GM12878 (cell line): ENCODE measurements at regions of chr13 and their contacts with region 1.

Region 1: GRCh38 chr13:30408319-30409101 is 13.8 kb upstream of the UBE2L5 start:
- DNase-seq: no peak
- ATAC-seq: peak; percentile 97
- H3K4me3 ChIP-seq: no peak overlapping the region; the same call in 1 of the 2 replicates
- H3K27ac ChIP-seq: no peak overlapping the region
- H3K4me1 ChIP-seq: peaks cover 6% of the 10 kb centered on the region
- H3K27me3 ChIP-seq: no peaks in the 10 kb centered on the region
- CTCF ChIP-seq: peak; percentile 56 to 86 (median 74)
- EP300 ChIP-seq: 0 out of 4 replicates have a peak, but pooled peaks of 1 of the 2 experiments have one; percentile 22
- POLR2A ChIP-seq: peak; percentile 62
- RAD21 ChIP-seq: peak; percentile 72

Region 2: GRCh38 chr13:30395192-30396084 is 13.1 kb before region 1 on chr13:
- CTCF ChIA-PET with region 1: interaction called, 14 read pairs
- POLR2A ChIA-PET with region 1: interaction called, 5 read pairs
- RAD21 ChIA-PET with region 1: interaction called, 6 read pairs
- SMC1A ChIA-PET with region 1: interaction called, 16 read pairs
- in situ Hi-C with region 1: no loop called
- intact Hi-C with region 1: no loop called
- DNase-seq: peak; percentile 60
- ATAC-seq: peak; percentile 85
- H3K4me3 ChIP-seq: peak overlapping the region; percentile 82
- H3K27ac ChIP-seq: peak overlapping the region; percentile 89
- H3K4me1 ChIP-seq: peaks cover 7% of the 10 kb centered on the region
- H3K27me3 ChIP-seq: no peaks in the 10 kb centered on the region
- CTCF ChIP-seq: no peak
- EP300 ChIP-seq: peak in 1 of 2 experiments; percentile 56; a peak in 1 of 4 replicates
- POLR2A ChIP-seq: peak; percentile 34
- RAD21 ChIP-seq: no peak

Region 3: GRCh38 chr13:30572859-30573275 is 164.4 kb after region 1 on chr13:
- CTCF ChIA-PET with region 1: no interaction called
- POLR2A ChIA-PET with region 1: no interaction called
- RAD21 ChIA-PET with region 1: no interaction called
- SMC1A ChIA-PET with region 1: no interaction called
- in situ Hi-C with region 1: no loop called
- intact Hi-C with region 1: loop called (anchors 5 kb)
- DNase-seq: peak; percentile 28
- ATAC-seq: peak; percentile 81
- H3K4me3 ChIP-seq: no peak overlapping the region; the same call in 1 of the 2 replicates
- H3K27ac ChIP-seq: no peak overlapping the region
- H3K4me1 ChIP-seq: peaks cover 17% of the 10 kb centered on the region; the same call in 1 of the 2 replicates
- H3K27me3 ChIP-seq: peaks cover 0 to under 1% of the 10 kb centered on the region in 2 experiments; a peak in 1 of 4 replicates
- CTCF ChIP-seq: peak; percentile 5 to 35 (median 31); a peak in 3 of 6 replicates
- EP300 ChIP-seq: no peak
- POLR2A ChIP-seq: no peak
- RAD21 ChIP-seq: peak; percentile 68

Region 4: GRCh38 chr13:30617315-30618185 is 209.0 kb after region 1 on chr13 and contains the start of gene USPL1:
- CTCF ChIA-PET with region 1: no interaction called
- POLR2A ChIA-PET with region 1: no interaction called
- RAD21 ChIA-PET with region 1: no interaction called
- SMC1A ChIA-PET with region 1: no interaction called
- in situ Hi-C with region 1: no loop called
- intact Hi-C with region 1: no loop called
- DNase-seq: peak; percentile 96
- ATAC-seq: peak; percentile 91
- H3K4me3 ChIP-seq: peak within 1 kb of the TSS; percentile 91
- H3K27ac ChIP-seq: peak within 1 kb of the TSS; percentile 93
- H3K4me1 ChIP-seq: peaks cover 8% of the 10 kb centered on the region
- H3K27me3 ChIP-seq: no peaks in the 10 kb centered on the region
- CTCF ChIP-seq: peak in 1 of 3 experiments; percentile 6; a peak in 1 of 6 replicates
- EP300 ChIP-seq: peak; percentile 84 to 95
- POLR2A ChIP-seq: peak; percentile 93
- RAD21 ChIP-seq: peak; percentile 17; the same call in 1 of the 2 replicates
- polyA plus RNA-seq, gene USPL1: 7.9 to 8.0 TPM

Region 5: GRCh38 chr13:30679483-30680330 is 271.2 kb after region 1 on chr13:
- CTCF ChIA-PET with region 1: no interaction called
- POLR2A ChIA-PET with region 1: no interaction called
- RAD21 ChIA-PET with region 1: no interaction called
- SMC1A ChIA-PET with region 1: no interaction called
- in situ Hi-C with region 1: no loop called
- intact Hi-C with region 1: no loop called
- DNase-seq: no peak
- ATAC-seq: peak; percentile 96
- H3K4me3 ChIP-seq: no peak overlapping the region
- H3K27ac ChIP-seq: no peak overlapping the region
- H3K4me1 ChIP-seq: no peaks in the 10 kb centered on the region
- H3K27me3 ChIP-seq: 0 out of 4 replicates have a peak, but pooled peaks cover 0 to 2% of the 10 kb centered on the region in 2 experiments
- CTCF ChIP-seq: peak; percentile 63 to 73 (median 71)
- EP300 ChIP-seq: no peak
- POLR2A ChIP-seq: no peak
- RAD21 ChIP-seq: peak; percentile 86

Region 6: GRCh38 chr13:30785191-30785850 is 376.8 kb after region 1 on chr13:
- CTCF ChIA-PET with region 1: no interaction called
- POLR2A ChIA-PET with region 1: no interaction called
- RAD21 ChIA-PET with region 1: no interaction called
- SMC1A ChIA-PET with region 1: no interaction called
- in situ Hi-C with region 1: no loop called
- intact Hi-C with region 1: no loop called
- DNase-seq: no peak
- ATAC-seq: no peak
- H3K4me3 ChIP-seq: no peak overlapping the region
- H3K27ac ChIP-seq: no peak overlapping the region
- H3K4me1 ChIP-seq: no peaks in the 10 kb centered on the region
- H3K27me3 ChIP-seq: no peaks in the 10 kb centered on the region
- CTCF ChIP-seq: no peak
- EP300 ChIP-seq: no peak
- POLR2A ChIP-seq: no peak
- RAD21 ChIP-seq: no peak